Cardiac septum (tissue), 1 donor: ENCODE measurements at regions of chr9 and their contacts with region 1.

Region 1: DNA sequence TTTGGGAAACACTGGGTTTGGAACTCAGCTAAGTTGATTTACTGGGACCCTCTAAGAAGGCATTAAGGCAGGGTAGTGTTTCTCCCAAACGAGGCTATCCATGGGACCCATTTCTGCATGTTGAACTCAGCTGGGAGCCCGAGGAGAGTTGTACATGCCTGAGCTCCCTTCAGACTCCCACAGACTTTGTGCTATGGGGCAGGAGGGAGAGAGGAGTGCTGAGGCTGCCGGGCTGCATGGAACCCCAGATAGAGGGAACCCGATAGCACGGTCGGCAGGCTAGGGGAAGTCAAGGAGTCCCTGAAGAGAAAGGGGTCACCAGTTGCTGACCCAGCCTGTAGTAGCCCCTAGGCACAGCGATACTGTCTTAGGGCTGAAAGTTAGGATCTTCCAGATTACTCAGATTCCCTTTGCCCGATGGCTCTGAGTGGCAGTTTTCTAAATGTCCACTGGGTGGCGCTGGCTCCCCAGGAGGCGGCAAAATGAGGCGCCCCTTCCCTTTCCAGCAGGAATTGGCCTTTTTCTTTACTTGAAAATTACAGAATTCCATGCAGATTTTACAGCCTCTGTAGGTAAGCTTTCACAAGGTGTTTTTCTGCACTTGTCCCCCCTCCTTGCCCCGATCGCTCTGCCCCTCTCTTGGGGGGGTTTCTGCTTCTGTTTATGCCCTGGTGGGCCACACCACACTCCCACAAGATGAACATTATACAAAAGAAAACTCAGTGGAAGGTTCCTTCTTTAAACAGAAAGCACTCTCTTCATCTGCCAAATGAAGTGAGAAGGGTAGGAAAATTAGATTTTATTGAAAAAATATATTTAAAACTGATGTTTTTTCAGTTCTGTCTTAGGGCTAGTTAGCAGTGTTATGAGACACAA is 17.8 kb downstream of the NANS start:
- DNase-seq: peak; percentile 83

Region 2: DNA sequence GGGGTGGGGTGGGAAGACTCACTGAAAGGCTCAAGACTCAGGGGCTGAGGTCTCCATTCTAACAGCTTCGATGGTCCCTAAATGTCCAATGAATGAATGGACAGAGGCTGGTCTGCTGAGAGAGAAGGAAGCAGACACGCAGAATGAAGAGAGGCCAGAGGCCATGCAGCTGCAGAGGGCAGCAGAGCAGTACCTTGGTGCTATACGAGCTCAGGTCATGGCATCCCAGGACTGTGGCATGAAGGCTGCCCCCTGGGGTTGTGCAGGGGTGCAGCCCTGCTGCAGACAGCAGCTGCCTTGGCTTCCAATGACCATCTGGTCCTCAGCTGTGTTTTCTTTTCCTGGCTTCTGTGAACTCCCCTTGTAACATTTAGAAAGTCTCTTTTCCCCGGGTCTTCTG is 133.3 kb after region 1 on chr9:
- intact Hi-C with region 1: loop called (anchors 5 kb)
- DNase-seq: no peak

Region 3: GRCh38 chr9:98263482-98264357 is 189.4 kb after region 1 on chr9:
- intact Hi-C with region 1: loop called (anchors 2 kb)
- DNase-seq: peak; percentile 89

Region 4: DNA sequence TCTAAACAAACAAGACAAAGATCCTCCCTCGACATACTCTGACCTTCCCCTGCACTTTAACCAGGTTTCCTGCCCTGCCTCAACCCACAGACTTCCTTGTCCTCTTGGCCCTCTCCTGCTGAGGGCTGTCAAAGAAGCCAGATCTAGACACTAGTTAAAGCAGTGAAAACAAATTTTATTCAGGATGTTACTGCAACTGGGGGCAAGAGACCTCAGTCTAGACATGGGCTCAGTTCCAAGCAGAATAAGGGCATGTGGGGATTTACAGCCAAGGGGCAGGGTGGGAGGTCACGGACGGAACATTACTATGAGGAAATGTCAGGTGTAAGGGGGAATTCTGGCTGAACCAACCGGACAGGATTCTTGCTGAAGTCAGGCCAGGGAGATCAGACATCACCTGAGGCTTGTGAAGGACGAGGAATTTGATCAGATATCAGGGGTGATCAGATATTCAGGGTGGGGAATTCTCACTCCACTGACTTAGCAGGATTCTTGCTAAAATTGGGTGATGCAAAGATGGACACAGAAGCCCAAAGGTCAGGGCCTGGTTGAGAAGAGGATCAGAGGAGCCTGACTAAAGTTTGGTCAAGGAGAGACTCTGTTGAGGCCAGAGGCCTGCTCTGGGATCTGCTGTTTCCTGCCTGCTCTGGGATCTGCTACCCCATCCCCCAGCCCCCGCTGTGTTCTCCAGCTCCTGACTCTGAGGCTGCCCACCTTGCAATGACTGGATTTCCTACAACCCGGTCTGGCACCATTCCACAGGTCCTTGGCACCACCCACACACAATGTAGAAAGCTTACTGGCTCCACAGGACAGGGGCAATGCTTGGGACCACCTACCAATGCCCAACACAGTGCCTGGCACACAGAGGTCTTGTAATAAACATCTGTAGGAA is 612.9 kb after region 1 on chr9:
- intact Hi-C with region 1: no loop called
- DNase-seq: no peak